ENCODE measurements at regions of chr6 and their contacts with region 1.

Region 1: DNA sequence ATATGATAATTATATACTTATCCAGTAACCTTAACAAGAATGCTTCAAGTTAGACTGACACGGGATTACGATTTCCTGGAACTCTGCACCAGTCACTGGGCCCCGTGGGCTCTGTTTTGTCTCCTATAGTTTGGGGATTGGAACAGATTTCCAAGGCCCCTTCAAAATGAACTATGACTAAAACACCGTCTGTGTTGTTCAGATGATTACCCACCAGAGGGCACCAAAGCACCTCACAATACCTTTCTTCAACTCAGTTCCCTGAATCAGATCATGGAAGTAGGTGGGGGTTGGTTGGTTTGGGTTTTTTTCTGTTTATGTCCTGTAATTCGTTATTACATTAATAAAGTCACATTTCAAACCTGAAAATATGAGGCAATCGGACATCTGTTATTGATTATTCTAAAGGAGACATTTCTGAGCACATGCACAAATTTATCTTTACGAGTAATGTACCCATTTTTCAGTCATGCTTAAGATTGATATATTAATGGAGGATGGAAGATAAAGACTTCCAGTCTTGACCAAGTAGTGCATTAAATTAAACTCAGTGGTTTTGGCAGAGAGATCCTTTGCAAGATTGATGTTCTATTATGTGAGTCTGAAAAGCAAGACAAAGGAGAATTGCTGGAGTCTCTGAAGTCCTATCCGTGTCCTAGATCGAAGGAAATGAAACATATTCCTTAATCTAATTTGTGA is 112.0 kb upstream of the COL21A1 start:
- DNase-seq: peak; percentile 72
- ATAC-seq: peak; percentile 95
- H3K4me3 ChIP-seq: no peak overlapping the region
- H3K27ac ChIP-seq: no peak overlapping the region
- H3K4me1 ChIP-seq: no peaks in the 10 kb centered on the region
- H3K27me3 ChIP-seq: no peaks in the 10 kb centered on the region
- CTCF ChIP-seq: peak; percentile 70 to 81 (median 79); a peak in 5 of 6 replicates
- POLR2A ChIP-seq: no peak
- RAD21 ChIP-seq: peak; percentile 94

Region 2: GRCh38 chr6:56570413-56571359 is 211.3 kb after region 1 on chr6:
- CTCF ChIA-PET with region 1: interaction called, 3 read pairs
- POLR2A ChIA-PET with region 1: no interaction called
- RAD21 ChIA-PET with region 1: no interaction called
- intact Hi-C with region 1: loop called (anchors 5 kb)
- DNase-seq: no peak
- ATAC-seq: peak; percentile 79
- H3K4me3 ChIP-seq: no peak overlapping the region
- H3K27ac ChIP-seq: no peak overlapping the region
- H3K4me1 ChIP-seq: no peaks in the 10 kb centered on the region
- H3K27me3 ChIP-seq: no peaks in the 10 kb centered on the region
- CTCF ChIP-seq: peak; percentile 24 to 61 (median 50); a peak in 5 of 6 replicates
- POLR2A ChIP-seq: no peak
- RAD21 ChIP-seq: peak; percentile 44

Region 3: GRCh38 chr6:56595490-56596122 is 236.3 kb after region 1 on chr6:
- CTCF ChIA-PET with region 1: interaction called, 5 read pairs
- POLR2A ChIA-PET with region 1: no interaction called
- RAD21 ChIA-PET with region 1: no interaction called
- intact Hi-C with region 1: loop called (anchors 1 kb)
- DNase-seq: peak; percentile 12
- ATAC-seq: peak; percentile 80
- H3K4me3 ChIP-seq: no peak overlapping the region
- H3K27ac ChIP-seq: no peak overlapping the region
- H3K4me1 ChIP-seq: no peaks in the 10 kb centered on the region
- H3K27me3 ChIP-seq: no peaks in the 10 kb centered on the region
- CTCF ChIP-seq: peak; percentile 40 to 70 (median 59); a peak in 5 of 6 replicates
- POLR2A ChIP-seq: no peak
- RAD21 ChIP-seq: peak; percentile 45

Region 4: GRCh38 chr6:56699066-56699654 is 339.8 kb after region 1 on chr6:
- CTCF ChIA-PET with region 1: no interaction called
- POLR2A ChIA-PET with region 1: no interaction called
- RAD21 ChIA-PET with region 1: no interaction called
- intact Hi-C with region 1: loop called (anchors 5 kb)
- DNase-seq: no peak
- ATAC-seq: peak; percentile 49
- H3K4me3 ChIP-seq: no peak overlapping the region
- H3K27ac ChIP-seq: no peak overlapping the region
- H3K4me1 ChIP-seq: peaks cover 19 to 20% of the 10 kb centered on the region in 2 experiments
- H3K27me3 ChIP-seq: no peaks in the 10 kb centered on the region
- CTCF ChIP-seq: peak in 2 of 3 experiments; percentile 59; a peak in 3 of 6 replicates
- POLR2A ChIP-seq: no peak
- RAD21 ChIP-seq: peak; percentile 62

Region 5: DNA sequence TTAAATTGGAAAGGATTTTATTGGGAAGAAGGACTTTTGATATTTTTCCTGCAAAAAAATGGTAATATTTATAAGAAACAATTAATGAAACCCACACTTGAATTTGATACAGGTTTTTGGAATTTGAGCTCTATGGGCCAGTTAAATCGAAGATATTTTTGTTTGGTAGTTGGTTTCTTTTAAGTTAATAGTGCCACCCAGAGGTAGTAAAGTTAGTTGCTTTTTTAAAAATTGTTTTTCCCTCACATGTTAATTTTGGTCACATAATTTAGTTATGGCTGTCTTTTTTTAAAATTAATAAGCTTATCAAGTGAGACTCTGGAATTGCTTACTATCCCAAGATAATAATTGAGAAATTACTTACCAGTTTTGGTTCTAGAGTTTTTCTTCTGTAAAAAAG is 965.2 kb after region 1 on chr6:
- CTCF ChIA-PET with region 1: no interaction called
- POLR2A ChIA-PET with region 1: no interaction called
- RAD21 ChIA-PET with region 1: no interaction called
- intact Hi-C with region 1: loop called (anchors 10 kb)
- DNase-seq: no peak
- ATAC-seq: no peak
- H3K4me3 ChIP-seq: no peak overlapping the region
- H3K27ac ChIP-seq: no peak overlapping the region
- H3K4me1 ChIP-seq: no peaks in the 10 kb centered on the region
- H3K27me3 ChIP-seq: no peaks in the 10 kb centered on the region
- CTCF ChIP-seq: peak; percentile 13 to 53 (median 34); a peak in 3 of 6 replicates
- POLR2A ChIP-seq: no peak
- RAD21 ChIP-seq: peak; percentile 53

Measured in HCT116 (cell line).